Mammary epithelial cell (primary cell): ENCODE measurements at regions of chr7 and their contacts with region 1.

Region 1: DNA sequence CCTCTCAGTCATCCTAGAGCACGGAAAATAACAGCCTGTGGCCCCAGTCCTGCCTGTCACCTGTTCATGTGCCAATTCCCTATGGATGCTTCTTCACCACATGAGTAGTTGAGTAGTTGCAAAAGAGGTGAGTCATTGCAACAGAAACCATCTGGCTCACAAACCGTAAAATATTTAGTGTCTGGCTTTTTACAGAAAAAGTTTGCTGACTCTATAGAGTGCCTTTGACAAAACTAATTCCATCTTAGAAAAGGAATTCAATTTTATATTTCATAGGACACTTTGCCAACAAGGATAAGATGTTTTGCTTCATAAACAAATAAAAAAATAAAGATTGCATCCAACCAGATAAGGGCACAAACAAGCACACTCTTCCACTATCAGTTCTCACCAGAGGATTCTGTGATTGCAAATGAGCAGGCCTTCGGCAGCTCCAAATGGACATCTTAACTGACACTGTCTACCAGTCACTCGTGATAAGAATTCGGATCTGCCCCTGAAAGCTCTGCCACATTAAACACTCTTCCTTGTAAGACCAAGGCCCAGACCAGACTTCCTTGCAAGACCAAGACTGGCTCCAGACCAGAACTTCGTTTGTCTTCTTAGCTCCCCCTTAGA is 242.7 kb upstream of the SEMA3C start:
- DNase-seq: peak; percentile 95
- H3K4me3 ChIP-seq: no peak overlapping the region
- H3K27ac ChIP-seq: peak overlapping the region; percentile 46
- H3K4me1 ChIP-seq: peaks cover 9% of the 10 kb centered on the region
- H3K27me3 ChIP-seq: no peaks in the 10 kb centered on the region
- CTCF ChIP-seq: no peak

Region 2: DNA sequence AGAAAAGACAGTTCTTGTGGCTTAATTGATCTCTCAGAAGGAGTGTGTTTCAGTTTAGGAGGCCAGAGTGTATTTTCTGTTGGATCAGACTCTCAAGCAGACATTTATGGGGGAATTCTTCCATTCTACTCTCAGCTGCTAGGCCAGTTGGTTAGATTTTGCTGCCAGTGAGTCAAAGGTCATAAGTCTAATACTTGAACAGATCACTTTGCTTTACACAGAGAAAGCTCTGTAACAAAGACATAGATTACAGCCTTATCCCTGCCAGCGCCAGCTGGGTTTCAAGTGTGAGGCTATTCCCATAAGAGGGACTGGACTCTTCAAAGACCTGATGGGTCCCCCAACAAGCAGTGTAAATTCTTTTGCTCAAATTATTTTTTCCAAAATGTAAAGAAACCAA is 97.1 kb before region 1 on chr7:
- CTCF ChIA-PET with region 1: no interaction called
- dilution Hi-C with region 1: no loop called
- in situ Hi-C with region 1: loop called in 1 of 2 experiments (anchors 25 kb)
- intact Hi-C with region 1: no loop called
- DNase-seq: no peak
- H3K4me3 ChIP-seq: no peak overlapping the region
- H3K27ac ChIP-seq: no peak overlapping the region
- H3K4me1 ChIP-seq: no peaks in the 10 kb centered on the region
- H3K27me3 ChIP-seq: no peaks in the 10 kb centered on the region
- CTCF ChIP-seq: no peak